PC-9 (cell line): ENCODE measurements at regions of chr16 and their contacts with region 1.

Region 1: GRCh38 chr16:31117391-31118197 is at the start of gene KAT8:
- DNase-seq: peak; percentile 98 to 100
- H3K4me3 ChIP-seq: peak within 1 kb of the TSS; percentile 74
- H3K27ac ChIP-seq: peak within 1 kb of the TSS; percentile 91
- H3K4me1 ChIP-seq: peaks cover 16% of the 10 kb centered on the region
- H3K27me3 ChIP-seq: no peaks in the 10 kb centered on the region
- CTCF ChIP-seq: no peak
- total RNA-seq, gene KAT8: 81.4 and 84.3 TPM in 2 replicates

Region 2: DNA sequence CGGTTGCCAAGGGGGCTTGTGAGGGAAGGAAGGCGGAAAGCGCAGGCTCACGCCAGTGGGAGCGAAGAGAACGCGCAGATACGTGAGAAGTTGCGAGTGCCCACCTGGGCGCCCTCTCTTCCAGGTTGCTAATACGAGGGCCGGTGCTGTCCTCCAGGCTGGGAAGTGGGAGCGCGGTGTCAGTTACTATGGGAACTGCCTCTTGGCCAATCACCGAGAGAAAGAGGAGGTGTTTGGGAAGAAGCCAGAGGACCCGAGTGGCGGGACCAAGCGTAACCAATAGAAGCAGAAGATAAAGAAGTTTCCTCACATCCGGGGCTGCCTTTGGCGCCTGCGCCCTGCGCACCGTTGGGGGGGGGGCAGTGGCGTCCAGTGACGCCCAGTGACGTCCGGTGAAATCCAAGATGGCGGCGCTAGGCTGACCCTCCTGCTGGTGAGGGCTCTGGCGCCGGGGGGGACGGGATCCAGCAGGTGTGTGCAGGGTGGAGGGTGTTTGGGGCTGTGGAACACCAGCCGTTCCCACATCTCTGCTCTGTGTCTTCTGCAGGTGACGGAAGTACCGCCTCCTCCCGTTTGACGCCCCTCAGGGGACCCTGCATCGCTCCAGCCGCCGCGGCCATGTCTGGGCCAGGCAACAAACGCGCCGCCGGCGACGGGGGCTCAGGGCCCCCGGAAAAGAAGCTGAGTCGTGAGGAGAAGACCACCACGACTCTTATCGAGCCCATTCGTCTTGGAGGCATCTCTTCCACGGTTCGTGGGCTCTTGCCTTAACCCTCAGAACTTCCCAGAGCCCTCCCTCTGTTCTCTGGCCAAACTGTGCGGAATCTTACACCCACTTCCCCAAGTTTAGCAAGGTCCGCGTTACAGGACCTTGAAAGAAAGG is 355.4 kb before region 1 on chr16 and contains the starts of genes CFAP119 and RNF40:
- CTCF ChIA-PET with region 1: no interaction called
- POLR2A ChIA-PET with region 1: interaction called, 21 read pairs
- intact Hi-C with region 1: no loop called
- DNase-seq: peak; percentile 96 to 99
- H3K4me3 ChIP-seq: peak within 1 kb of the TSS; percentile 83
- H3K27ac ChIP-seq: peak within 1 kb of the TSS; percentile 2; the same call in 1 of the 2 replicates
- H3K4me1 ChIP-seq: peaks cover 24% of the 10 kb centered on the region
- H3K27me3 ChIP-seq: no peaks in the 10 kb centered on the region
- CTCF ChIP-seq: no peak
- total RNA-seq, gene CFAP119: 17.9 and 19.9 TPM in 2 replicates
- total RNA-seq, gene RNF40: 149 and 178 TPM in 2 replicates

Region 3: DNA sequence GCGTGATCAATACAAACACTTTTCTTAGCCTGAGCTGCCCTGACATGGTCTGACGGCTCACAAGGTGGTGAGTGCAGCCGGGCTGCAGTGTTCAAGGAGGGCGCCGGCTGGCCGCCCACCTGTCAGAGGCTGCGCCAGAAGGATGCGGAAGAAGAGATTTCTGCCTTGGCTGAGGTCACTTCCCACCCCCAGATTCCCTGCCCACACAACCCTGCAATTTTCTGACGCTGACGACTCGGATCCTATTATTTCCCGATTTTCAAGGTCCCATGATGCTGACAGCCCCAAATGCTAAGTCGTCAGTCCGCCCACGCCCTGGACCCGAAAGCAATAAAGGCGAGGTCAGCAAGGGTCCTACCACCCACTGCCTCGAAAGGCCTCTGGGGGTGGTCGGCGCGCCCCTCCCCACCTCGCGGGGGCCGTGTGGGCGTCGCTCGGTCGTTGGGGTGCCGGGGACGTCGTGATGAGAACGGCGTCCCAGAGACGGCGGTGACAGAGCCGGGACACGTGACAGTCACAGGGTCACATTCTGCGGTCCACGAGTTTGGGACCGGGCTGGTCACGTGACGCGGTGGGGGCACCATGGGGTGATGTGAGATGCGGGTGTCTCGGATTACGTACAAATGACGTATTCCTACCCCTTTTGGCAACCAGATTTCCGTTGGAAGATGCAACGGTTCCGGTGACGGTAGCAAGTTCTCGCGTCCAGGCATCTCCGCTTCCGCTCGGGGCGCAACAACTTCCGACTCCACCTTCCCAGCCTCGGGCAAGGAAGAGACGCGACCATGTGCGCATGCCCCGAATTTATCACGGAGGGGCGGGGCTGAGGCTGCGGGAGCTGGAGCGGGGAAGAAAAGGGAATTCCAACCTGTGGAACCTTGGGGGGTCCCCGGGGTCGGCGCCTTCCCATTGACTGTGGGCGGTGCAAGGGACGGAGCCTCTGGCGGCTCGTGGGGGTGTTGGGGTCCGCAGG is 84.6 kb before region 1 on chr16 and contains the start of gene STX4:
- CTCF ChIA-PET with region 1: no interaction called
- POLR2A ChIA-PET with region 1: interaction called, 6 read pairs
- intact Hi-C with region 1: loop called (anchors 2 kb)
- DNase-seq: peak; percentile 93 to 99
- H3K4me3 ChIP-seq: peak within 1 kb of the TSS; percentile 87
- H3K27ac ChIP-seq: peak within 1 kb of the TSS; percentile 62
- H3K4me1 ChIP-seq: peaks cover 12% of the 10 kb centered on the region
- H3K27me3 ChIP-seq: no peaks in the 10 kb centered on the region
- CTCF ChIP-seq: no peak
- total RNA-seq, gene STX4: 85.8 and 100 TPM in 2 replicates

Region 4: DNA sequence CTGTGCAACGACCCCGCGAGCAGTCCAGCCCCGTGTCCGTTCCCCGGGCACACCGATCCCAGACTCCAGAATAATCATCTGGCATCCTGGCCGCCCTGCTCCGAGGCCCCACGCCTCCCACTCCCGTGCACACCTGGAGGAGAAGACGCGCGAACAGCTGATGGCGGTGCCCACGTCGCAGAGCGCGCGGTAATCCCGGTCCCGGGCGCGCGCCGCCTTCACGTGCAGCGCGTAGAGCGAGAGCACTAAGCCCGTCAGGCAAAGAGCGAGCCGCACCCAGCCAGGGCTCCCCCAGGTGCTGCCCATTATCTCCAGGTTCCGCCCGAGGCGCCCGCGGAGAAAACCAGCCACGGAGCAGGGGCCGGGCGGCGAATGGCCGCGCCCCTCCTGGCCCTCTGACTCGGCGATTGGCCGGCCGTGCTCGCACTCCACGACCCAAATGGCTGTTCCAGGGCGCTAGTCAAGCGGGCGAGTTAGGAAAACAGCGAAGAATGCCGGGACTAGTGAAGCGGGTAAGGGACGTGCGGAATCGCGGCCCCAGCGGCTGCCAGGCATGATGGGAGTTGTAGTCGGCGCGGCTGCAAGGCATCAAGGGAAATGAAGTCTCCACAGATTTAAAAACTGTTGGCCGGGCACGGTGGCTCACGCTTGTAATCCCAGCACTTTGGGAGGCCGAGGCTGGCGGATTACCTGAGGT is 23.0 kb before region 1 on chr16 and contains the start of gene VKORC1:
- CTCF ChIA-PET with region 1: no interaction called
- POLR2A ChIA-PET with region 1: interaction called, 5 read pairs
- intact Hi-C with region 1: loop called (anchors 1 kb)
- DNase-seq: peak; percentile 97 to 99
- H3K4me3 ChIP-seq: peak within 1 kb of the TSS; percentile 71
- H3K27ac ChIP-seq: peak within 1 kb of the TSS; percentile 35
- H3K4me1 ChIP-seq: 0 out of 2 replicates have a peak, but pooled peaks cover 3% of the 10 kb centered on the region
- H3K27me3 ChIP-seq: no peaks in the 10 kb centered on the region
- CTCF ChIP-seq: no peak
- total RNA-seq, gene VKORC1: 46.0 and 59.9 TPM in 2 replicates

Region 5: GRCh38 chr16:31134625-31135547 is 17.3 kb after region 1 on chr16:
- CTCF ChIA-PET with region 1: interaction called, 3 read pairs
- POLR2A ChIA-PET with region 1: interaction called, 29 read pairs
- intact Hi-C with region 1: loop called (anchors 1 kb)
- DNase-seq: peak; percentile 70 to 76
- H3K4me3 ChIP-seq: peak overlapping the region; percentile 59
- H3K27ac ChIP-seq: peak overlapping the region; percentile 71
- H3K4me1 ChIP-seq: peaks cover 68% of the 10 kb centered on the region
- H3K27me3 ChIP-seq: no peaks in the 10 kb centered on the region
- CTCF ChIP-seq: no peak; the same call in 1 of the 2 replicates

Region 6: DNA sequence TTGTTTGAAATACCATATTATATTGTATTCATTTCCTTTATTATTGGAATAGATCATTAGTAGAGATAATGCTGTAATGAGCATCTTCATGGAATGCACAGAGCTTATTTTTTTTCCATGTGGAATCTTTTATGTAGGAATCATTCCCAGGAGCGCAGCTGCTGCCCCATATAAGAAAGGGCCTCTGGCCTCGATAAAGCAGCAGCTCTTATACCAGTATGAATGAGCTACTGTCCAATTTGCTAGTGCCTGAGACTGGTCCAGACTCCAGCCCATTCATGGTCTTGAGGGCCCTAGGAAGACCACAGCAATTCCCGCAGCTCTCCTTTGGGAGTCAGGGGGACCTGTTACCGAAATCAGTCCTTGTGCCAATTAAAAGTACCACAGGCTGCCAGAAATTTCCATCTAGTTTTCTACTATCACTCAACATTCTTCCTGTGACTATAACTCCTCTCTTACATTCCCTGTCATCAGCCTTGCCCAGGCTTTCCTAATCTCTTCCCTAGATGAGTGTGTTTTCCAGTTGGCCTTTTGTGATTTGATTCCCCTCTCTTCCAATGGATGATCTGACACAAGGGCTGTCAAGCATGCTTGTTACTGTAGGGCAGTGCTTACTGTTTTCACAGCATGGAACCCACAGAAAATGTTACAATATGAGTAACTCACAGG is 323.1 kb after region 1 on chr16:
- CTCF ChIA-PET with region 1: no interaction called
- POLR2A ChIA-PET with region 1: interaction called, 20 read pairs
- intact Hi-C with region 1: no loop called
- DNase-seq: no peak
- H3K4me3 ChIP-seq: no peak overlapping the region
- H3K27ac ChIP-seq: no peak overlapping the region
- H3K4me1 ChIP-seq: no peaks in the 10 kb centered on the region
- H3K27me3 ChIP-seq: no peaks in the 10 kb centered on the region
- CTCF ChIP-seq: no peak